SK-N-SH (cell line): ENCODE measurements at regions of chr20 and their contacts with region 1.

Region 1: GRCh38 chr20:41339507-41340326 is 904 bp upstream of the LPIN3 start:
- DNase-seq: peak; percentile 87
- H3K4me3 ChIP-seq: peak overlapping the region in 1 of 2 experiments; percentile 46; a peak in 1 of 4 replicates
- H3K27ac ChIP-seq: no peak overlapping the region
- H3K4me1 ChIP-seq: peaks cover 0 to 5% of the 10 kb centered on the region in 2 experiments; a peak in 1 of 4 replicates
- H3K27me3 ChIP-seq: no peaks in the 10 kb centered on the region
- CTCF ChIP-seq: peak; percentile 96
- EP300 ChIP-seq: no peak
- RAD21 ChIP-seq: peak; percentile 90

Region 2: GRCh38 chr20:40431112-40432010 is 908.4 kb before region 1 on chr20:
- CTCF ChIA-PET with region 1: no interaction called
- POLR2A ChIA-PET with region 1: no interaction called
- DNase-seq: no peak
- H3K4me3 ChIP-seq: no peak overlapping the region
- H3K27ac ChIP-seq: no peak overlapping the region
- H3K4me1 ChIP-seq: no peaks in the 10 kb centered on the region; a peak in 1 of 4 replicates
- H3K27me3 ChIP-seq: no peaks in the 10 kb centered on the region
- CTCF ChIP-seq: no peak
- EP300 ChIP-seq: no peak
- RAD21 ChIP-seq: no peak

Region 3: GRCh38 chr20:41136680-41137613 is 202.8 kb before region 1 on chr20 and contains the start of gene PLCG1:
- CTCF ChIA-PET with region 1: interaction called, 11 read pairs
- POLR2A ChIA-PET with region 1: no interaction called
- DNase-seq: peak; percentile 99
- H3K4me3 ChIP-seq: peak within 1 kb of the TSS; percentile 94 to 97
- H3K27ac ChIP-seq: peak within 1 kb of the TSS; percentile 79 to 93
- H3K4me1 ChIP-seq: peaks cover 9 to 41% of the 10 kb centered on the region in 2 experiments; a peak in 3 of 4 replicates
- H3K27me3 ChIP-seq: no peaks in the 10 kb centered on the region
- CTCF ChIP-seq: no peak
- EP300 ChIP-seq: no peak
- RAD21 ChIP-seq: no peak
- polyA plus RNA-seq, gene PLCG1: 81.4 and 81.9 TPM in 2 replicates

Region 4: DNA sequence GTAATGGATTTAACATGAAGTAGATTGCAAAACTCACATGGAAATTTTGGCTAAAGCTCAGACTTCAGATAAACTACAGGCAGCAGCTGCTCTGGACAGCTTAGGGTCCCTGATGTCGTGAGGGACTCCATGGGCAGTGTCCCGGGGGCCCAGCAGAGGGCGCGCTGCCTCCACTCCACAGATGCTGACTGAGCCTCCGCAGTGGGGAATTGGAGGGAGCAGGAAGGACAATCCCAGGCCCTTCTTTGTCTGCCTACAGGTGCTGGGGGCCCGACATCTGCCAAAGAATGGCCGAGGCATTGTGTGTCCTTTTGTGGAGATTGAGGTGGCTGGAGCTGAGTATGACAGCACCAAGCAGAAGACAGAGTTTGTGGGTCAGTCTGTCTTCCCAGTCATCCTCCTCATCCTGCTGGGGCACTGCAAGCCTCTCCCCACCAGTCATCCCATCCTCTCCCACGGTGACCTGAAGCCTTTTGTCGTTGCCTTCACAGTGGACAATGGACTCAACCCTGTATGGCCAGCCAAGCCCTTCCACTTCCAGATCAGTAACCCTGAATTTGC is 166.5 kb before region 1 on chr20:
- CTCF ChIA-PET with region 1: interaction called, 112 read pairs
- POLR2A ChIA-PET with region 1: no interaction called
- DNase-seq: peak; percentile 85
- H3K4me3 ChIP-seq: peak overlapping the region in 1 of 2 experiments; percentile 30; a peak in 1 of 4 replicates
- H3K27ac ChIP-seq: peak overlapping the region in 1 of 2 experiments; percentile 29; a peak in 1 of 4 replicates
- H3K4me1 ChIP-seq: peaks cover 0 to 10% of the 10 kb centered on the region in 2 experiments; a peak in 3 of 4 replicates
- H3K27me3 ChIP-seq: no peaks in the 10 kb centered on the region
- CTCF ChIP-seq: peak; percentile 95
- EP300 ChIP-seq: no peak
- RAD21 ChIP-seq: peak; percentile 92

Region 5: DNA sequence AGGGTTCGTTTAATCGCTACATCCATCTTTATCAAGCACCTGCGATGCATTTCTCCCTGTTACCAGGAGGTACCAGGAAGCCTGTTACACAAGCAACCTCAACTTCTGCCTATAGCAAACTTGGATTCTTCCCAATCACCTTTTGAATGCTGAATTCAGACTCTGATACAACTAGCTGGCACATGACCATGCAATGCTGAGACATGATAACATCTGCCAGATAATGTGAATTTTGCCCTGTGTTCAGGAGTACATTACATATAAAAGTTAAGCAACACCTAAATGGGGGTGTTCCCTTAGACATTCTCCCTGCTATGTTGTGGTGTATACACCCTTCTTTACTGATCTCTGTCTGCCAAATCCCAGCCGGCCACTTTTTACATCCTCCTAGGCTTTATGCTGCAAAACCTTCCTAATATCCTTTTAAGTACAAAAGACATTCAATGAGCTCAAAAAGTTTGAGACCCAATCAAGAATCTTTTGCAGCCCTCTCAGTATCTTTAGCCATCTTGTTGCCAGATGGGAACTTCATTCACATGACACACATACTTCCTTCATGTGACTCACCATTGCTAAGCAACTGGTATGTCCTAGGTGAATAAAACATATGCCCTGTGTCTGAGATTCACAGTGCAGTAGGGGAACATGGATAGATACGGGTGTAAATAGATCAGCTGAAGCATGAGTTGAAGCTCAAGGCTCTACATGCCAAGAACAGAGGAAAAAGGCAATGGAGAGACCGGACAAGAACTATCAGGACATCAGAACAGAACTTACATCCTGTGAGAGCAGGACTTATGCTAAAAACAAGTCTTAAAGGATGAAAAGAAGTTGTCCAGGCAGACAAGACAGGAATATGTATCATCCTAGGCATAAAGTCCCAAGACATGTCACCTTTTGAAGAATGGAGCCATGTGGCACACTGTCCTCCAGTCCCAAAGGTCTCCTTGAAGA is 106.5 kb before region 1 on chr20:
- CTCF ChIA-PET with region 1: interaction called, 38 read pairs
- POLR2A ChIA-PET with region 1: no interaction called
- DNase-seq: no peak
- H3K4me3 ChIP-seq: no peak overlapping the region
- H3K27ac ChIP-seq: peak overlapping the region in 1 of 2 experiments; percentile 65; a peak in 3 of 4 replicates
- H3K4me1 ChIP-seq: peaks cover 7 to 21% of the 10 kb centered on the region in 2 experiments; a peak in 3 of 4 replicates
- H3K27me3 ChIP-seq: no peaks in the 10 kb centered on the region
- CTCF ChIP-seq: no peak
- EP300 ChIP-seq: no peak
- RAD21 ChIP-seq: no peak

Region 6: GRCh38 chr20:41268917-41269652 is 70.6 kb before region 1 on chr20:
- CTCF ChIA-PET with region 1: no interaction called
- POLR2A ChIA-PET with region 1: no interaction called
- DNase-seq: no peak
- H3K4me3 ChIP-seq: no peak overlapping the region
- H3K27ac ChIP-seq: no peak overlapping the region
- H3K4me1 ChIP-seq: no peaks in the 10 kb centered on the region; a peak in 1 of 4 replicates
- H3K27me3 ChIP-seq: no peaks in the 10 kb centered on the region
- CTCF ChIP-seq: no peak
- EP300 ChIP-seq: no peak
- RAD21 ChIP-seq: no peak

Region 7: GRCh38 chr20:41329435-41330342 is 10.0 kb before region 1 on chr20:
- CTCF ChIA-PET with region 1: interaction called, 18 read pairs
- POLR2A ChIA-PET with region 1: no interaction called
- DNase-seq: no peak
- H3K4me3 ChIP-seq: no peak overlapping the region
- H3K27ac ChIP-seq: peak overlapping the region; percentile 3 to 93; a peak in 3 of 4 replicates
- H3K4me1 ChIP-seq: peaks cover 0 to 14% of the 10 kb centered on the region in 2 experiments; a peak in 1 of 4 replicates
- H3K27me3 ChIP-seq: no peaks in the 10 kb centered on the region
- CTCF ChIP-seq: no peak
- EP300 ChIP-seq: peak in 1 of 2 experiments; percentile 31; a peak in 1 of 4 replicates
- RAD21 ChIP-seq: no peak

Region 8: GRCh38 chr20:41357424-41358163 is 17.9 kb after region 1 on chr20:
- CTCF ChIA-PET with region 1: interaction called, 55 read pairs
- POLR2A ChIA-PET with region 1: no interaction called
- DNase-seq: no peak
- H3K4me3 ChIP-seq: no peak overlapping the region
- H3K27ac ChIP-seq: no peak overlapping the region
- H3K4me1 ChIP-seq: peaks cover 0 to 11% of the 10 kb centered on the region in 2 experiments; a peak in 1 of 4 replicates
- H3K27me3 ChIP-seq: no peaks in the 10 kb centered on the region
- CTCF ChIP-seq: peak; percentile 7; the same call in 1 of the 2 replicates
- EP300 ChIP-seq: no peak
- RAD21 ChIP-seq: no peak

Region 9: DNA sequence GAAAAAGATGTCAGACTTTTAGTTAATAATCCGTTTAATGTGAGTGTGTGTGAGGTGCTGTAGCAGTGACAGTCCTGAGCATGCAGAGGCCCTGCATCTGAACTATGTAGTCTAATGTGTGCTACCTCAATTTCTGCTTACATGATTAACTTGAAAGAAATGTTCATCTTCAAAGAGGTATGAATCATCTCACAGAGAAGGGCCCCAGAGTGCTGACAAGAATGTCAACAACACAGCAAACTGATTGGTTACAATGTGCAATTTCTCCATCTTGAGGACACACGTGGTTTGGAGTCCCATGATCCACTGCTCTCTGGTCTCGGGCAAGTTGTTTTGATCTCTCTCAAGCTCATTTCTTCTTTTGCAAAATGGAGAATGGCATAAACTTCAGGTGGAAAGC is 88.6 kb after region 1 on chr20:
- CTCF ChIA-PET with region 1: no interaction called
- POLR2A ChIA-PET with region 1: no interaction called
- DNase-seq: no peak
- H3K4me3 ChIP-seq: no peak overlapping the region
- H3K27ac ChIP-seq: no peak overlapping the region
- H3K4me1 ChIP-seq: peaks cover 0 to 5% of the 10 kb centered on the region in 2 experiments; a peak in 2 of 4 replicates
- H3K27me3 ChIP-seq: no peaks in the 10 kb centered on the region
- CTCF ChIP-seq: no peak
- EP300 ChIP-seq: no peak
- RAD21 ChIP-seq: no peak